Transverse colon (tissue), 4 donors: ENCODE measurements at regions of chr19 and their contacts with region 1.

Region 1: GRCh38 chr19:55494172-55494761 is 6.0 kb downstream of the SSC5D start:
- DNase-seq: no peak
- H3K4me3 ChIP-seq: peak overlapping the region in 1 of 4 donors; percentile 14
- H3K27ac ChIP-seq: peak overlapping the region; percentile 42 to 85 (median 62)
- H3K4me1 ChIP-seq: peaks cover 0 to 14% (median 5%) of the 10 kb centered on the region in 4 donors
- H3K27me3 ChIP-seq: peaks cover 14% of the 10 kb centered on the region
- CTCF ChIP-seq: no peak
- EP300 ChIP-seq: no peak
- POLR2A ChIP-seq: no peak

Region 2: DNA sequence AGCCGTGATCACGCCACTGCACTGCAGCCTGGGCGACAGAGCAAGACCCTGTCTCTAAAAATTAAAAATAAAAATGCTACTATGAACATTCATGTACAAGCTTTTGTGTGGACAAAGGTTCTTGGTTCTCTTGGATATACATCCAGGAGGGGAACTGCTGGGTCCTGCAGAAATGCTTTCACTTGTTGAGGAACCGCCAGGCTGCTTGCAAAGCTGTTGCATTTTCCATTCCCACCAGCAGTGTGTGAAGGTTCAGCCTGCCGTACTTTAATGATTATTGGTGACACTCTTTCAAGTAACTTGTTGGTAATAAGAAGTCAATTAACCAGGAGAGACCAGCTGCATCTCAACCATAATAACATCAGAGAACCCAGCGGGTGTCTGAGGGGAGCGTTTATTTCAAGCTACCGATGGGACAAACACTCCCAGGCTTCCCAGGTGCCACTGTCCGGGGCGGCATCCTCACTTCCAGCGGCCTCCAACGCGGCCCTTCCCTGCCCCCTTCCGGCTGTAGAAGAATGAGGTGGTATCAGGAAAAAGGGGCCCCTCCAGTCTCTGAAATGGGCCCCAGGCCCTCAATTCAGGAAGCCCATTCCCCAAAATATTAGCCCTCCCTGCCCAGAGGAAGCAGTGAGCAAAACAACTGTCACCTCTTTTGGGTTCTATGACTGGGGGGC is 361.7 kb before region 1 on chr19:
- in situ Hi-C with region 1: loop called in 1 of 4 experiments (anchors 10 kb)
- intact Hi-C with region 1: no loop called
- DNase-seq: no peak
- H3K4me3 ChIP-seq: no peak overlapping the region
- H3K27ac ChIP-seq: no peak overlapping the region
- H3K4me1 ChIP-seq: no peaks in the 10 kb centered on the region
- H3K27me3 ChIP-seq: peaks cover 79% of the 10 kb centered on the region
- CTCF ChIP-seq: peak in 1 of 5 experiments; percentile 3
- EP300 ChIP-seq: no peak
- POLR2A ChIP-seq: no peak

Region 3: DNA sequence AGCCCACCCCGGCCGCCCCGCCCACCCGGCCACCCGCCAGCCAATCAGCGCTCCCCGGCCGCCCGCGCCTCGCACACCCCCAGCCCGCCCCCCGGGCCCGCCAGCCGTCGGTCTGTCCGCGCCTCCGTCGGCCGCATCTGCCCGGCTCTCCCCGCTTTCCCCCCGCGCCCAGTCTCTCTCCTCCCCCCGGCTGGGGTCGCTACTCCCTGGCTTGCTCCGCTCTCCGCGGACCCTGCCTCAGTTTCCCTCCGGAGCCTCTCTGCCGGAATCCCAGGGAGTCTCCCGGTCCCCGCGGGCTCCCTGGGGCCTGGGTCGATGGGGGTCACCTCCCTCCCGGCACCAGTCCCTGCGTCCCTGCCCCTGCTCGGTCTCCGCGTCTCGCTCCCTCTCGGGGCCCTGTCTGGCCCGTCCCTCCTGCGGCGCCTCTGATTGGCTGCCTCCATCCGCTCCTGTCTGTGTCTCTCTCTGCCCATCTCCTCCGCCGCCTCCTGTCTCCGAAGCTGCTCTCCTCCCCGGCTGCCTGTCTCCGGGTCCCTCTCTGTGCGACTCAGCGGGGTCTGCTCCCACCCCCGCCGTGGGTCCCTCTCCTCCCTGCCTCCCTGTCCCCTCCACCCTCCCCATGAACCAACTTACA is 124.5 kb before region 1 on chr19:
- in situ Hi-C with region 1: no loop called
- intact Hi-C with region 1: no loop called
- DNase-seq: no peak
- H3K4me3 ChIP-seq: peak overlapping the region in 2 of 4 donors; percentile 19 to 44
- H3K27ac ChIP-seq: peak overlapping the region in 1 of 4 donors; percentile 41
- H3K4me1 ChIP-seq: peaks cover 3 to 27% (median 18%) of the 10 kb centered on the region in 4 donors
- H3K27me3 ChIP-seq: peaks cover 78% of the 10 kb centered on the region
- CTCF ChIP-seq: no peak
- EP300 ChIP-seq: no peak
- POLR2A ChIP-seq: no peak

Region 4: GRCh38 chr19:55526216-55527196 is 32.2 kb after region 1 on chr19:
- in situ Hi-C with region 1: no loop called
- intact Hi-C with region 1: no loop called
- DNase-seq: peak; percentile 80
- H3K4me3 ChIP-seq: no peak overlapping the region
- H3K27ac ChIP-seq: no peak overlapping the region
- H3K4me1 ChIP-seq: peaks cover 5 to 11% (median 10%) of the 10 kb centered on the region in 4 donors
- H3K27me3 ChIP-seq: peaks cover 4% of the 10 kb centered on the region
- CTCF ChIP-seq: no peak
- EP300 ChIP-seq: no peak
- POLR2A ChIP-seq: no peak